ENCODE measurements at regions of chr10 and their contacts with region 1.

Region 1: GRCh38 chr10:33412653-33413361 is 78.3 kb upstream of the NRP1 start:
- DNase-seq: peak; percentile 85
- H3K4me3 ChIP-seq: no peak overlapping the region
- H3K27ac ChIP-seq: no peak overlapping the region
- H3K4me1 ChIP-seq: peaks cover 11% of the 10 kb centered on the region
- H3K27me3 ChIP-seq: no peaks in the 10 kb centered on the region
- CTCF ChIP-seq: no peak

Region 2: GRCh38 chr10:33258967-33259366 is 153.8 kb before region 1 on chr10:
- CTCF ChIA-PET with region 1: no interaction called
- dilution Hi-C with region 1: no loop called
- in situ Hi-C with region 1: no loop called
- intact Hi-C with region 1: no loop called
- DNase-seq: peak; percentile 60
- H3K4me3 ChIP-seq: no peak overlapping the region
- H3K27ac ChIP-seq: no peak overlapping the region
- H3K4me1 ChIP-seq: peaks cover 31% of the 10 kb centered on the region
- H3K27me3 ChIP-seq: no peaks in the 10 kb centered on the region
- CTCF ChIP-seq: no peak

Region 3: GRCh38 chr10:33314811-33315561 is 97.8 kb before region 1 on chr10:
- CTCF ChIA-PET with region 1: no interaction called
- dilution Hi-C with region 1: no loop called
- in situ Hi-C with region 1: no loop called
- intact Hi-C with region 1: no loop called
- DNase-seq: no peak
- H3K4me3 ChIP-seq: no peak overlapping the region
- H3K27ac ChIP-seq: no peak overlapping the region
- H3K4me1 ChIP-seq: peaks cover 15% of the 10 kb centered on the region
- H3K27me3 ChIP-seq: no peaks in the 10 kb centered on the region
- CTCF ChIP-seq: no peak

Region 4: GRCh38 chr10:33365871-33366411 is 46.9 kb before region 1 on chr10:
- CTCF ChIA-PET with region 1: no interaction called
- dilution Hi-C with region 1: loop called (anchors 5 kb)
- in situ Hi-C with region 1: no loop called
- intact Hi-C with region 1: no loop called
- DNase-seq: peak; percentile 95
- H3K4me3 ChIP-seq: no peak overlapping the region
- H3K27ac ChIP-seq: peak overlapping the region; percentile 87
- H3K4me1 ChIP-seq: peaks cover 33% of the 10 kb centered on the region
- H3K27me3 ChIP-seq: no peaks in the 10 kb centered on the region
- CTCF ChIP-seq: no peak

Measured in mammary epithelial cell (primary cell).